ENCODE measurements at regions of chr9 and their contacts with region 1.

Region 1: DNA sequence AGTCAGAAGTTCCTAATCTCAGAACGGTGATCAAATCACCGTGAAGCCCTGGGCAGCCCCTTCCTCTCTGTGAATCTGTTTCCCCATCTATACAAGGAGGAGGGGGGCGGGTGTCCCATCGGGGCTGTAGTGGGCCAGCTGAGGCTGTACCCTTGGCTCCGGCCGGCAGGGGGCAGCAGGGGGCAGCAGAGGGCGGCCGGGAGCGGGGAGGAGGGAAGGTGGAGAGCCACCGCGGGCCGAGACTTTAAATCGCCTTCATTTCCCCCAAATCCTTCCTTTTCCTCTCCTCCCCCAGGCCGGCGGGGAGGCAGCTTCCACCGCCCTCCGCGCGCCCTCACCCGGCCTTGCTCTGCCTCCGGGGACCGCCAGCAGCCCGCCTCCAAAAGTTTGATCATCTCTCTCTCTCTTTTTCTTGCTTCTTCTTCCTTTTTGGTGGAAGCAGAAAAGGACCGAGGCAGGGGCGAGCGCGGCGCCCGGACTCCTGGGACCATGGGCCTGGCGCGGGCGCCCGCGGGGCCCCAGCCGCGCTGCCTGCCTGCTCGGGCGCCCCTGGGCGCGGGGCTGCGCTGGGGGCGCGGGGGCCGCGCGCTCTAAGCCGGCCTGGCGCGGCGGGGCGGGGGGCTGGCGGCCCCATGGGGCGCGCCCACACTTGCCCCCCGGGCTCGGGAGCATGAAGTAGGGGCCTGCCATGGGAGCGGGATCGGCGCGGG is at the start of gene COL27A1:
- DNase-seq: peak; percentile 92
- ATAC-seq: peak; percentile 91
- total RNA-seq, gene COL27A1: 8.0 TPM

Region 2: DNA sequence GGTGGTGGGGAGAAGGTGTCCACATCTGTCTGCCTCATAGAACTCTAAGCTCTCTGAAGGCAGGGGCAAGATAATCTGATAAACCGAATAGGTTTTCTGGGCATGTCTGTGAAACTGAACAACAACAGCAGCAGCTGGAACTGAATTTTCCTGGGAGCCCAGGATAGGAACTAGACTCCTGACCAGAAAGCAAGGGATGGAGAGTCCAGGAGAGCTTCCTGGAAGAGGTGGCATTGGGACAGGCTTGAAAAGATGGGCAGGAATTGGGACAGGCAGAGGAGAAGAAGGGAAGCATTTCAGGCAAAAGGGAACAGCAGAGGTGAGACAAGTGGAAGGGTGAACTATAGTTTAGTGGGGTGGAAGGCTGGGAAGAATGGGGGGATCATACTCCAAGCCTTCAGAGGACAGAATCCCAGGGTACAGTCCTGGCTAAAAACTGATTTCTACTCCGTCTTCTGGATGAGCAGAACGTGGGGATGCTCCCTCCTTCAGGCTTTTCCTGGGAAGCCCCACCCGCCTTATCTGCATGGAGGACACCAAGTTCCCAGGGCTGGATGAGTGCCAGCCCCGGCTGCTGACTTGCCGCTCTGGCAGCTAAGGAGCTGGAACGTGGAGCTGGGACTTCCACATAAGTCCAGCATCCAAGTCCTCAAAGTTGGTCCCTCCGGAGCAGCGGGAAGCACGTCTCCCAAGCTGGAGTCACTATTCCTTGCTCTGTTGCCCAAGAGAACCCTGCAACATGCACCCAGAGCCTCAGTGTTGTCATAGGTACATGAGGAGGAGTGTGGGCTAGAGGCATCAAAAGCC is 42.4 kb before region 1 on chr9:
- intact Hi-C with region 1: no loop called
- DNase-seq: peak; percentile 93
- ATAC-seq: peak; percentile 85

Region 3: GRCh38 chr9:114271641-114272081 is 116.2 kb after region 1 on chr9:
- intact Hi-C with region 1: loop called (anchors 2 kb)
- DNase-seq: peak; percentile 57
- ATAC-seq: peak; percentile 86